ENCODE measurements at regions of chr3 and their contacts with region 1.

Region 1: GRCh38 chr3:52056968-52057805 is 816 bp upstream of the DUSP7 start:
- DNase-seq: peak; percentile 90
- ATAC-seq: peak; percentile 85
- H3K4me3 ChIP-seq: peak overlapping the region; percentile 73
- H3K27ac ChIP-seq: peak overlapping the region; percentile 83
- H3K4me1 ChIP-seq: peaks cover 33% of the 10 kb centered on the region
- H3K27me3 ChIP-seq: no peaks in the 10 kb centered on the region
- CTCF ChIP-seq: peak in 1 of 3 experiments; percentile 12; a peak in 1 of 6 replicates
- EP300 ChIP-seq: no peak
- POLR2A ChIP-seq: peak; percentile 56; the same call in 1 of the 2 replicates
- RAD21 ChIP-seq: no peak

Region 2: GRCh38 chr3:51995346-51996163 is 61.6 kb before region 1 on chr3 and contains the start of gene RPL29:
- CTCF ChIA-PET with region 1: interaction called, 334 read pairs
- POLR2A ChIA-PET with region 1: interaction called, 5 read pairs
- RAD21 ChIA-PET with region 1: interaction called, 165 read pairs
- SMC1A ChIA-PET with region 1: interaction called, 179 read pairs
- in situ Hi-C with region 1: no loop called
- intact Hi-C with region 1: no loop called
- DNase-seq: peak; percentile 88
- ATAC-seq: peak; percentile 92
- H3K4me3 ChIP-seq: peak within 1 kb of the TSS; percentile 99
- H3K27ac ChIP-seq: peak within 1 kb of the TSS; percentile 66
- H3K4me1 ChIP-seq: peaks cover 9% of the 10 kb centered on the region
- H3K27me3 ChIP-seq: no peaks in the 10 kb centered on the region; a peak in 1 of 4 replicates
- CTCF ChIP-seq: no peak
- EP300 ChIP-seq: no peak
- POLR2A ChIP-seq: peak; percentile 100
- RAD21 ChIP-seq: no peak
- polyA plus RNA-seq, gene RPL29: 1,053 to 1,085 TPM

Region 3: DNA sequence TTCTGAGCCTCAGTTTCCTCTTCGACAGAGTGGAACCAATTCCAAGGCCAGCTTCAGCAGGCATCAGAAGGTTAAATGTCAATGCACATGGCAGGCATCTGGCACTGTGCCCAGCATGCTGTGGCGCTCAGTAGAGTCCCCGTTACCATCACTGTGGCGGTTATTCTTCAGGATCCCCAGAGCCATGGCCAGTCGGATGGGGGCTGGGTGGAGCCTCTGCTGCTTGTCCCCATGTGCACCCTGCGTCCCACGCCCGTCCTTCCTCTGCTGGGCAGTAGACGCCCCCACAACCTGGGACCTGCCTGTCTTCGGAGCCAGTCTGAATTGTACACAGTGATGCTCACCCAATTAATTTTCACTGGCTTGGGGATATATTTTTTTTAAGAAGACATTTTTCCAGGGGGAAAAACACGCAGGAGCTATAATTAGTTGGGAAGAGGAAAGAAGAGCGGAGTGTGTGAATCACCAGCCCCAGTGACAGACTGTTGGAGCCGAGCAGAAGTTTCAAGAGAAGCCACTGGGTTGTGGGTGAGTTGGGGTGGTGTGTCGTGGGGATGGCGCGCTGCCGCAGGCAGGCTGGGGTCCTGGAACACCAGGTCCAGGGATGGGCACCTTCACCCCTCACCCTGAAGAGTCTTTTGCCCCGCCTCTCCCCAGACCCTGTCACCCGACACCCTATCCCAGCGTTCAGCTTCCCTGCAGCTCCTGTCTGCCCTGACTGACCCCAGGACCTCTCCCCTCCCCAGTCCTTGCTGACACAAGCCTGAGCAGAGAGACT is 34.7 kb before region 1 on chr3:
- CTCF ChIA-PET with region 1: interaction called, 93 read pairs
- POLR2A ChIA-PET with region 1: interaction called, 21 read pairs
- RAD21 ChIA-PET with region 1: interaction called, 70 read pairs
- SMC1A ChIA-PET with region 1: interaction called, 116 read pairs
- in situ Hi-C with region 1: no loop called
- intact Hi-C with region 1: loop called (anchors 1 kb)
- DNase-seq: no peak
- ATAC-seq: no peak
- H3K4me3 ChIP-seq: no peak overlapping the region
- H3K27ac ChIP-seq: no peak overlapping the region
- H3K4me1 ChIP-seq: peaks cover 18% of the 10 kb centered on the region
- H3K27me3 ChIP-seq: no peaks in the 10 kb centered on the region
- CTCF ChIP-seq: no peak
- EP300 ChIP-seq: no peak
- POLR2A ChIP-seq: no peak
- RAD21 ChIP-seq: no peak

Region 4: DNA sequence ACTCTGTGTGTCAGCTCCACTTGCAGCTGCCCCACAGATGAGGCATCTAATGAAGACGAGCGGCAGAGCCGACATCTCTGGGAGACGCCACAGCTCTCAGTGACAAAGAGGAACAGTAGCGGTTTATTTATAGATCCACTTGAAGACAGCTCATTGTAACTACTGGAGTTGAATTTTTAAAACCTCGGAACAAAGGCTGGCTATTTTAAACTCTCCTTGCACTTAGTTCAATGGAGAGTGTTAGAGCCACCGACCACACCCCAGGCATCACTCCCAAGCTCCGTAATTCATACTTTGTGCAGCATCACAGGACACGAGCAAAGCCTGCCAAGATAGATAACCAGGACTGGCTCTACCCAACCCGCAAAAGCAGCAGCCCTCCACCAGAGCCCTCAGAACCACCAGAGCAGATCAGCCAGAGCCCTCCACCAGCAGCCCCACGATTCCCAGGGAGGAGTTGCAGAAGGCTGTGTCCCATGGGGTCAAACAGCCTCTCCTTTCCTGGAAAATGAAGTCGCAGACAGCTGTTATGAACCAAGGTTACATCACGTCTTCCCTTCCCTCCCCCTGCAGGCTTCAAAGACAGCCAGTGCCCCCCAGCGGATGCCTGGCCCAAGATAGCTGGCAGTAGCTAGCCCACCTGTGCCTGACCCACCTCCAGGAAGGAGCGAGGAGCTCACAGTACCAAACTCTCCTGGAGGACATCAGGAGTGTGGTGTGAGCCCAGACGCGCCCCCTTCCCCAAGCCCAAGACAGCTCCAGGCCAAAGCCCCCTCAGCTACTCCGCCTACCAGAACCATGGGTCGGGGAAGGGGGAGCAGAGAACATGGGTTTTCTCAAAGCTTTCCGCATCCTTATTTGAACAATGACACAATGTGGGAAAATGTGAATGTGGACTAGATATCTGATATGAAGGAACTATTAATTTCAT is 51.4 kb after region 1 on chr3:
- CTCF ChIA-PET with region 1: interaction called, 19 read pairs
- POLR2A ChIA-PET with region 1: interaction called, 3 read pairs
- RAD21 ChIA-PET with region 1: interaction called, 17 read pairs
- SMC1A ChIA-PET with region 1: interaction called, 4 read pairs
- in situ Hi-C with region 1: no loop called
- intact Hi-C with region 1: loop called (anchors 5 kb)
- DNase-seq: no peak
- ATAC-seq: peak; percentile 51; the same call in 2 of the 3 replicates
- H3K4me3 ChIP-seq: no peak overlapping the region
- H3K27ac ChIP-seq: no peak overlapping the region
- H3K4me1 ChIP-seq: no peaks in the 10 kb centered on the region
- H3K27me3 ChIP-seq: no peaks in the 10 kb centered on the region
- CTCF ChIP-seq: peak in 1 of 3 experiments; percentile 5; a peak in 2 of 6 replicates
- EP300 ChIP-seq: no peak
- POLR2A ChIP-seq: no peak
- RAD21 ChIP-seq: peak; percentile 37; the same call in 1 of the 2 replicates

Region 5: GRCh38 chr3:52144034-52144795 is 87.0 kb after region 1 on chr3:
- CTCF ChIA-PET with region 1: interaction called, 34 read pairs
- POLR2A ChIA-PET with region 1: interaction called, 3 read pairs
- RAD21 ChIA-PET with region 1: interaction called, 17 read pairs
- SMC1A ChIA-PET with region 1: interaction called, 10 read pairs
- in situ Hi-C with region 1: no loop called
- intact Hi-C with region 1: loop called (anchors 1 kb)
- DNase-seq: no peak
- ATAC-seq: peak; percentile 100
- H3K4me3 ChIP-seq: no peak overlapping the region
- H3K27ac ChIP-seq: no peak overlapping the region
- H3K4me1 ChIP-seq: peaks cover 5% of the 10 kb centered on the region; the same call in 1 of the 2 replicates
- H3K27me3 ChIP-seq: no peaks in the 10 kb centered on the region
- CTCF ChIP-seq: peak; percentile 92 to 97 (median 94); a peak in 5 of 6 replicates
- EP300 ChIP-seq: no peak
- POLR2A ChIP-seq: no peak
- RAD21 ChIP-seq: peak; percentile 93